A673 (cell line): ENCODE measurements at regions of chr19 and their contacts with region 1.

Region 1: DNA sequence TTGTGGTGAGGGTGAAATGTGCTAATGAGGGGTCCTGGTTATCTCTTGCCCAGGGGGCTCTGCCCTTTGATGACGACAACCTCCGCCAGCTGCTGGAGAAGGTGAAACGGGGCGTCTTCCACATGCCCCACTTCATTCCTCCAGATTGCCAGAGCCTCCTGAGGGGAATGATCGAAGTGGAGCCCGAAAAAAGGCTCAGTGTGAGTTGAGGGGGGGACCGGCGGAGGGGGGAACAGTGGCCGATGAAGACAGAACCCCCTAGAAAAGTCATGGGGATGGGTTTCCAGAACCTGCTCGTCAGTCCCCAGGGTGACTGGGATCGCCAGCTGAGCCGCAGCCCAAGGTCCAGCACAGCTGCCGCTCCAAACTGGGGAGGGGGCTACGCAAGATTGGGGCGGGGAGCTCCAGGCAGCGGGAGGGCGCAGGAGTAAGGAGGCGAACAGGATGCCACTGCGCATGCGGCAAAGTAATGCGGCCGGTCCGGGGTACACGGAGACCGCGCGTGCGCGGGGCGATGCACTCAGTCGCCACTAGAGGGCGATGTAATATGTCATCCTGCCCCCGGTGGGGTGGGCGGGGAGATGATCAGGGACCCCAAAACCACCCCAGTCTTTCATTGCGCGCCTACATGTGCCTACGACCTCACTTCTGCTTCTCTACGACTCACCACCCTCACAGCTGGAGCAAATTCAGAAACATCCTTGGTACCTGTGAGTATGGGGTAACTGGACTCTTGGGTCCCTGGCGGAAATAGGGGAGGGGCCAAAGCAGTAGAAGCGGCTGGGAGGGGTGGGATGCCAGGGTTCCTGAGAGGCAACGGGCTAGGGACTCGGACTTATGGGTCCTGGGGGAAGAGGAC is 17.9 kb downstream of the BRSK1 start:
- DNase-seq: peak; percentile 88
- H3K4me3 ChIP-seq: peak overlapping the region; percentile 33
- H3K27ac ChIP-seq: no peak overlapping the region
- H3K4me1 ChIP-seq: peaks cover 4% of the 10 kb centered on the region
- H3K27me3 ChIP-seq: no peaks in the 10 kb centered on the region
- CTCF ChIP-seq: peak; percentile 98

Region 2: GRCh38 chr19:55247608-55248099 is 54.0 kb before region 1 on chr19:
- CTCF ChIA-PET with region 1: no interaction called
- POLR2A ChIA-PET with region 1: no interaction called
- intact Hi-C with region 1: no loop called
- DNase-seq: no peak
- H3K4me3 ChIP-seq: no peak overlapping the region
- H3K27ac ChIP-seq: no peak overlapping the region
- H3K4me1 ChIP-seq: no peaks in the 10 kb centered on the region
- H3K27me3 ChIP-seq: no peaks in the 10 kb centered on the region
- CTCF ChIP-seq: no peak

Region 3: GRCh38 chr19:55279770-55280643 is 21.7 kb before region 1 on chr19 and contains the start of gene HSPBP1:
- CTCF ChIA-PET with region 1: interaction called, 4 read pairs
- POLR2A ChIA-PET with region 1: interaction called, 11 read pairs
- intact Hi-C with region 1: no loop called
- DNase-seq: peak; percentile 98
- H3K4me3 ChIP-seq: peak within 1 kb of the TSS; percentile 74
- H3K27ac ChIP-seq: peak within 1 kb of the TSS; percentile 84
- H3K4me1 ChIP-seq: peaks cover 12% of the 10 kb centered on the region
- H3K27me3 ChIP-seq: no peaks in the 10 kb centered on the region
- CTCF ChIP-seq: no peak
- total RNA-seq, gene HSPBP1: 80.3 and 83.4 TPM in 2 replicates

Region 4: DNA sequence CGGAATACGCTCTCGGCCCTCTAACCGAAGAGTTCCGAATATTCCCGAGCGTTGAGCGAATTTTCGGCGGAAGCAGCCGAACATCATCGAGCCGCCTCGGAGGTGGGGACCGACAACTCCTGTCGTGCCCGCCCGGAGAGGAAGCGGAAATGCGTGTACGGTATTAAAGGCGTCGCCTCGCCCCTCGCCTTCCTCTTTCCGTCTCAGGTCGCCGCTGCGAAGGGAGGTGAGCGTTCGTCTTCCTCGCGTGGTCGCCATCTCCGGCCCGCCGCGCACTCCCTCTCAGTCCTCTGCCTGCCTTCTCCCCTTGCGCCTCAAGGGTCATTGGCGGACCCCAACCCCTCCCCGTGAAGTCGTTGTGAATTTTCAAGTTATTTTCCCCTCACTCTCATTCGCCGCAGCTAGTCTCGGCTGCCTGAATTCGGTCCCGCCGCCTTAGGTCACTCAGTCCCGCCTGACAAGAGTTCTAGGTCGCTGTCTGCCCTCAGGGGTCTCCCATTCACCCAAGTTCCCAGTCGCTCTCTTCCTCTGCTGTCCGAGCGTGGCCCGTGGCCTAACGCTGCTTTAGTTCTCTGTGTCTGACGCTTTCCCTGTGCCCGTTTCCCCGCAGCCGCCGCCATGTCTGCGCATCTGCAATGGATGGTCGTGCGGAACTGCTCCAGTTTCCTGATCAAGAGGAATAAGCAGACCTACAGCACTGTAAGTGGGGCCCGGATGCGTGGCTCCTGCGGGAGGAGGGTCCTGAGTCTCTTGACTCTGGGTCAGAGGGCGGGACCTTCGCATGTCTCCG is 84.2 kb after region 1 on chr19 and contains the start of gene RPL28:
- CTCF ChIA-PET with region 1: no interaction called
- POLR2A ChIA-PET with region 1: no interaction called
- intact Hi-C with region 1: loop called (anchors 10 kb)
- DNase-seq: peak; percentile 99
- H3K4me3 ChIP-seq: peak within 1 kb of the TSS; percentile 98
- H3K27ac ChIP-seq: peak within 1 kb of the TSS; percentile 88
- H3K4me1 ChIP-seq: peaks cover 32% of the 10 kb centered on the region
- H3K27me3 ChIP-seq: no peaks in the 10 kb centered on the region
- CTCF ChIP-seq: no peak
- total RNA-seq, gene RPL28: 1,355 and 1,380 TPM in 2 replicates

Region 5: GRCh38 chr19:55526216-55527196 is 224.8 kb after region 1 on chr19:
- CTCF ChIA-PET with region 1: no interaction called
- POLR2A ChIA-PET with region 1: no interaction called
- intact Hi-C with region 1: no loop called
- DNase-seq: peak; percentile 21
- H3K4me3 ChIP-seq: no peak overlapping the region
- H3K27ac ChIP-seq: no peak overlapping the region
- H3K4me1 ChIP-seq: no peaks in the 10 kb centered on the region
- H3K27me3 ChIP-seq: no peaks in the 10 kb centered on the region
- CTCF ChIP-seq: no peak